ENCODE measurements at regions of chr11 and their contacts with region 1.

Region 1: GRCh38 chr11:120335908-120336640 is at the start of gene ARHGEF12:
- DNase-seq: peak; percentile 92
- CTCF ChIP-seq: peak; percentile 43

Region 2: DNA sequence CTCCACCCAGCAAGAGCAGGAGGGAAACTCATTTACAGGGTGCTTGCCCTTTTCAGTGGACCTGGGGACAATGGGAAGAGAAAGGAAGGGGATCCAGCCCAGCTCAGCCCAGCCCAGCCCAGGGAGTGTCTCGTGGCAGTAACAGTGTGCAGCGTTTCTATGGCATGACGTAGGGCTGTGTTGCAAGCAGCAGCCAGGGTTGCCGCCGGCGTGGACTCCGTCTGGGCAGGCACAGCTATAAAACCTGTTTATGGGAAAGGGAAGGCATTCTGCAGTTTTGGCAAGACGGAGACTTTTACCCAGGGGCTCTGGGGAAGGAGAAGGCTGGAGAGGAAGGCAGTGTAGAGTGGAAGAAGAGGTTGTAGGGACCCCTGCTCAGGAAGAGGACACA is 207.3 kb before region 1 on chr11:
- CTCF ChIA-PET with region 1: no interaction called
- POLR2A ChIA-PET with region 1: no interaction called
- DNase-seq: no peak
- CTCF ChIP-seq: no peak

Region 3: DNA sequence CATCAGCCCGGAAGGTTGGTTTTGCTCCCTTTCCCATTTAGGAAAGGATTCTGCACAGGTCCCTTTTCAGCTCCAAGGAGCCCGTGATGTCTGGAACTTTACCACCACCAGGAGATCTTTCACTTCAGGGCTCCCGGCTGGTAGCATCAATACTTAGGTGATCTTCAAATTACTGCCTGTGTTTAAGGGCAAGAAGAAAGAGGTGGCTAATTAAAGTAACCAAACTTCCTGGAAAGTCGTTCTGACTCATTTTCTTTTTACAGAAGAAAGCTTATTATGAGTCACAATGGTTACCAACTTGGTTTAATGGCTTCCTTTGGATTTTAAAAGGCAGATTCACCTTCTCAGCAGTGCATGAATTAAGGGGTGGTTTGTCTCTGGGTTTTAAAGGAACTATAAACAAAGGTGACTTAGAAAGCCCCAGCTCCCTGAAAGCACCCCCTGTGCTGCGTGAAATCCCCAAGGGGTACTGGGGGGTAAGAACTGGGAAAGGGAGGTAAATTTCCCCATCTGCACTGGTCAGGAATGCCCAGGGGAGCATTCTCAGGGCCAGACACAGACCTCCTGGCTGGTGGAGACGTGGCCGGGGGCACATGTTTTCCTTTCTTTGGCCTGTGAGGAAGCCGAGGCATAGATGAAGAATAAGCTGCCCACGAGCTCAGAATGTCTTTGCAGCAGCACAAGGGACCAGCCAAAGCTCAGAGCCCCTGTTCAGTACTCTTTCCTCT is 87.4 kb before region 1 on chr11:
- CTCF ChIA-PET with region 1: interaction called, 14 read pairs
- POLR2A ChIA-PET with region 1: no interaction called
- DNase-seq: no peak
- CTCF ChIP-seq: no peak

Region 4: DNA sequence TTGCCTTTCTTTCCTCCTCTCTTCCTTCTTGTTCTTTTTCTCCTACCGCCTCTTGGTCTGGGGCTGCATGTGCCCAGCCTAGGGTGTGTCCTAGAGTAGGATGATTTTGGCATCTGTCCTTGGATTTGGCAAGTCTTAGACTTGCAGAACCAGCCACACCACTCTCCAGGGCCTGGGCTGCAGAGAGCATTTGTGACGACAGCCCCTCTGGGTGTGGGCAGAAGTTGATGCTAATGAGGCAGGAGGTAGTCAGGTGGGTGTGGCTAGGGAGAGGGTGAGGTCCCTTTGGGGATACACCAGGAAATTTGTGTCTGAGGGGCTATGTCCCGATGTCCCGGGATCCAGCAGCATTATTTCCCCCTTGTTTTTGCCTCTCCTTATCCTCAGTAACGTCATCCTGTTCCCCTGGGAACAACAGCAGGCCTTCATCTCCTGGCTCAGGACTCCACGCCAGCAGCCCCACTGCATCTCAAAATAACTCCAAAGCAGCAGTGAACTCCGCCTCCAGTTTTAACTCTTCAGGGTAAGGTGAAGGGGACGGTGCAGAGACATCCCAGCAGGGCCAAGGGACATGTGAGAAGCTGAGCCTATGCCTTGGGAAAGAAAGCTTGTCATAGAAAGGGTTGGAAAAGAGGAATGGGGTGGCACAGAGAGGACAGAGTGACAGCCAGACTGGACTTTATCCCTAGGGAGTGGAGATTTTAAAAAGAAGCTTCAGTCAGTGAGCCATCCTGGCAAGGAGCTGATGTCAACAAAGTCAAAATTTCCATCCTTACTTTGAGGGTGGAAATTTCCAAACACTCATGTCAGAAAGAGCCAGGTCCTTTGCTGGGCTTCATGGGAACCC is 19.0 kb before region 1 on chr11:
- CTCF ChIA-PET with region 1: interaction called, 15 read pairs
- POLR2A ChIA-PET with region 1: no interaction called
- DNase-seq: no peak
- CTCF ChIP-seq: no peak

Region 5: GRCh38 chr11:120324932-120325810 is 10.9 kb before region 1 on chr11 and contains the start of gene TLCD5:
- CTCF ChIA-PET with region 1: interaction called, 22 read pairs
- POLR2A ChIA-PET with region 1: no interaction called
- DNase-seq: peak; percentile 75
- CTCF ChIP-seq: peak; percentile 16

Region 6: DNA sequence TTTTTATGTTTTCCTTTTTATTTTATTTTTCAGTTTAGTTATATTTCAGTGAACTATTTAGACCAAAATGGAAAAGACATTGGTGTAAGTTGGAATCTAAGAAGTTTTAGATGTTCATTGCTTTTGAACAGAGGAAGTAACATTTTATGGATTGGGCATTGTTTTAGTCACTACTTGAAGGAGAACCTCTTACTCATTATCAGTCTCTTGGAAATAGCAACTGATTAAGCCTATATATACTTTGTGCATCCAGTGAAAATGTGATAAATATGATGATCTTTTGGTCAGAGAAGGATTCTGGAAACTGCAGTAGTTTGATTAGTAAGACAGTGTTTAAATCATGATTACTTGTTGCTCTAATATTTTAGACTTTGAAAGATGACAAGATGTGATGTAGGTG is 14.6 kb after region 1 on chr11:
- CTCF ChIA-PET with region 1: interaction called, 16 read pairs
- POLR2A ChIA-PET with region 1: no interaction called
- DNase-seq: no peak
- CTCF ChIP-seq: no peak

Region 7: DNA sequence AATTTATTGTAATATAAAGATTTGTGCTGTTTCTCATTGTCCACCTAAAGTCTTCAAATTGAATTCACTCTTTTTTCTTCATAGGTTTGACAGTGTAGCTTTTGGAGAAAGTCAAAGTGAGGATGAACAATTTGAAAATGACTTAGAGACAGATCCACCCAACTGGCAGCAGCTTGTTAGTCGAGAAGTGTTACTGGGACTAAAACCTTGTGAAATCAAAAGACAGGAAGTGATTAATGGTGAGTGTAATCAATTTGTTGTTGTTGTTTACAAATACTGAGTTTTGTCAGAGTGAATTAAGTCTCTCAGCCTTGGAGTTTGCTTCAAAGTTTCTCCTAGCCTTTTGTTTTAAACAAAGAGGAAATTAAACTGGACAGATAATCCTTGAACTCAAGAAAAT is 121.9 kb after region 1 on chr11:
- CTCF ChIA-PET with region 1: interaction called, 13 read pairs
- POLR2A ChIA-PET with region 1: no interaction called
- DNase-seq: no peak
- CTCF ChIP-seq: no peak

Measured in GM10248 (cell line).